Endothelial cell of umbilical vein (primary cell): ENCODE measurements at regions of chr5 and their contacts with region 1.

Region 1: GRCh38 chr5:135476615-135477582 is 24.7 kb upstream of the TIFAB start:
- DNase-seq: no peak
- H3K4me3 ChIP-seq: no peak overlapping the region
- H3K27ac ChIP-seq: no peak overlapping the region
- H3K4me1 ChIP-seq: no peaks in the 10 kb centered on the region
- H3K27me3 ChIP-seq: peaks cover 28 to 40% of the 10 kb centered on the region in 2 experiments
- CTCF ChIP-seq: no peak
- POLR2A ChIP-seq: no peak

Region 2: DNA sequence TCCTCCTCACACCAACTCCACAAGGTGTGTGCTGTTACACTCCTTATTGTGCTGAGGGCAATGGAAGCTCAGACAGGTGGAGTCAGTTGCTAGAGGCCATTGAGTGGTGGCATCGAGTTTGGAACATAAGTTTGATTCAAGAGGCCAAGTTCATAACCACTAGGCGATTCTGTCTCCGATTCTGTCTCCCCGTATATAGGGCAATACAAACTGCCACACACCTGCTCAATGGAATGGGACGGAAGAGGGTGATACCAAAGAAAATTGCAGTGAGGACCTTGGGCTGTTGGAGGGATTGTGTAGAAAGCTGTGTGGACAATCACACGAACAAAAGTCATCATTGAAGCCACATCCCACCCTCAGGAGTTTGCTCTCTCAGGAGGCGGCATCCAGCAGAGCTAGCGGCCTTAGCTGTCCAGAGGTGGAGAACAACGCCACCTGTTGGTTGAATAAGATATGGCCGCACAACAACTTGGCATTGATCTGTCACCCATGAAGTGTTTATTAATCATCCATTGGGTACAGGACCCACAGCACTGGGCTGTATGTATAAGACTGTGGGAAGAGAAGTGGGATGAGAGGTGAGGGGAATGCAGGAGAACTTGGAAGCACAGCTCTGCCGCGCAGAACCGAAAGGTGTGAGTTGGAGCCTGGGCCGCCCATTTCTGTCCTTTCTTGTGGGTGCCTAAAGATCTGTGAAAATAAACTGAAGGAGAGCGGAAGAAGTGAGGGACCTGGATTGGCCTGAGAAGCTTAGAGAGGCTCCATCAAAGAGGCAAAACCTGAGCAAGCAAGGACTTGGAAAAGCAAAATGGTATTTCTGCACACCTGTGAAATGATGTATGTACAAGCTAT is 74.9 kb after region 1 on chr5:
- CTCF ChIA-PET with region 1: interaction called, 11 read pairs
- POLR2A ChIA-PET with region 1: no interaction called
- dilution Hi-C with region 1: loop called (anchors 25 kb)
- intact Hi-C with region 1: no loop called
- DNase-seq: peak; percentile 71
- H3K4me3 ChIP-seq: no peak overlapping the region
- H3K27ac ChIP-seq: no peak overlapping the region
- H3K4me1 ChIP-seq: no peaks in the 10 kb centered on the region
- H3K27me3 ChIP-seq: peaks cover 34 to 46% of the 10 kb centered on the region in 2 experiments
- CTCF ChIP-seq: peak; percentile 74 to 83
- POLR2A ChIP-seq: no peak